Breast epithelium (tissue), 4 donors: ENCODE measurements at regions of chr14 and their contacts with region 1.

Region 1: DNA sequence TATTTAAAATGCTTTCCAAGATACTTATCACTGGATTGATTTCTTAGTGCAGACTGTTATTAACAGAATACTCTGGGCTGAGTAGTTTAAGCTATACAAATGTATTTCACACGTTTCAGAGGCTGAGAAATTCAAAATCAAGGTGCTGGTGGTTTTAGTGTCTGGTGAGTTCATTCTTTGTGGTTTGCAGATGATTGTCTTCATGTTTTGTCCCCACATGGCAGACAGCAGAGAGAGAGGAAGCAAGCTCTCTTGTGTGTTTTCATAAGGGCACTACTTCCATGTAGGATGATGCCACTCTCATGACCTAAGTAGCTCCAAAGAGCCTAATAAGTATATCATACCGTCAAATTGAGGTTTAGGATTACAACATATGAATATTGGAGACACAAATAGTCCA is 1348.9 kb upstream of the FLRT2 start:
- DNase-seq: no peak
- H3K4me3 ChIP-seq: no peak overlapping the region
- H3K27ac ChIP-seq: no peak overlapping the region
- H3K4me1 ChIP-seq: no peaks in the 10 kb centered on the region
- H3K27me3 ChIP-seq: no peaks in the 10 kb centered on the region
- CTCF ChIP-seq: no peak
- POLR2A ChIP-seq: no peak

Region 2: GRCh38 chr14:85293612-85294234 is 1112.7 kb after region 1 on chr14:
- intact Hi-C with region 1: loop called (anchors 5 kb)
- DNase-seq: no peak
- H3K4me3 ChIP-seq: no peak overlapping the region
- H3K27ac ChIP-seq: no peak overlapping the region
- H3K4me1 ChIP-seq: no peaks in the 10 kb centered on the region
- H3K27me3 ChIP-seq: no peaks in the 10 kb centered on the region
- CTCF ChIP-seq: no peak
- POLR2A ChIP-seq: no peak